PC-3 (cell line): ENCODE measurements at regions of chr10 and their contacts with region 1.

Region 1: GRCh38 chr10:68156373-68157185 is 47.3 kb downstream of the MYPN start:
- DNase-seq: peak; percentile 97
- ATAC-seq: peak; percentile 46
- H3K4me3 ChIP-seq: no peak overlapping the region
- H3K27ac ChIP-seq: peak overlapping the region; percentile 85
- H3K4me1 ChIP-seq: peaks cover 30% of the 10 kb centered on the region
- H3K27me3 ChIP-seq: no peaks in the 10 kb centered on the region
- CTCF ChIP-seq: peak; percentile 100

Region 2: DNA sequence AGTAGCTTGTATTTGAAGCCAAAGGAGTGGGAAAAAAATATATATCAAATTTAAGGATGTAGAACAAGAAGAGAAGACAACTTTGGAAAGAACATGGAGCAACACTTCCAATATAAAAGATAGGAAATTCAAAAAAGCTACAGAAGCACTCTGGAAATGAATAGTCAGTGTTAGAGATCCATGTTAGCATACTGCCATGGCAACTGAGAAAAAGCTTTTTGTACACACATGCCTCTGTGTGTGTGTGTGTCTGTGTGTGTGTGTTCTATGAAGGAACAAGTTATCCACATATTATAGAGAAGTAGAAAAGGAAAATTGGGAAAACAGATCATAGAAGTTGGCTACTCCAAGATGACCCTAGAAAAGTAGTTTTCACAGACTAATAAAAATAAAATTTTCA is 1134.5 kb before region 1 on chr10:
- CTCF ChIA-PET with region 1: no interaction called
- POLR2A ChIA-PET with region 1: no interaction called
- intact Hi-C with region 1: no loop called
- DNase-seq: no peak
- ATAC-seq: no peak
- H3K4me3 ChIP-seq: no peak overlapping the region
- H3K27ac ChIP-seq: no peak overlapping the region
- H3K4me1 ChIP-seq: no peaks in the 10 kb centered on the region
- H3K27me3 ChIP-seq: peaks cover 52% of the 10 kb centered on the region
- CTCF ChIP-seq: no peak

Region 3: GRCh38 chr10:67925449-67926005 is 231.1 kb before region 1 on chr10:
- CTCF ChIA-PET with region 1: no interaction called
- POLR2A ChIA-PET with region 1: no interaction called
- intact Hi-C with region 1: no loop called
- DNase-seq: peak; percentile 60
- ATAC-seq: peak; percentile 30
- H3K4me3 ChIP-seq: no peak overlapping the region
- H3K27ac ChIP-seq: no peak overlapping the region
- H3K4me1 ChIP-seq: peaks cover 16% of the 10 kb centered on the region
- H3K27me3 ChIP-seq: no peaks in the 10 kb centered on the region
- CTCF ChIP-seq: 0 out of 2 replicates have a peak, but pooled peaks have one; percentile 13

Region 4: GRCh38 chr10:68010426-68010940 is 146.1 kb before region 1 on chr10:
- CTCF ChIA-PET with region 1: no interaction called
- POLR2A ChIA-PET with region 1: no interaction called
- intact Hi-C with region 1: no loop called
- DNase-seq: no peak
- ATAC-seq: no peak
- H3K4me3 ChIP-seq: no peak overlapping the region
- H3K27ac ChIP-seq: no peak overlapping the region
- H3K4me1 ChIP-seq: no peaks in the 10 kb centered on the region
- H3K27me3 ChIP-seq: no peaks in the 10 kb centered on the region
- CTCF ChIP-seq: no peak

Region 5: GRCh38 chr10:68067029-68067428 is 89.5 kb before region 1 on chr10:
- CTCF ChIA-PET with region 1: no interaction called
- POLR2A ChIA-PET with region 1: interaction called, 14 read pairs
- intact Hi-C with region 1: no loop called
- DNase-seq: no peak
- ATAC-seq: no peak
- H3K4me3 ChIP-seq: no peak overlapping the region
- H3K27ac ChIP-seq: no peak overlapping the region
- H3K4me1 ChIP-seq: peaks cover 31% of the 10 kb centered on the region
- H3K27me3 ChIP-seq: no peaks in the 10 kb centered on the region
- CTCF ChIP-seq: no peak

Region 6: DNA sequence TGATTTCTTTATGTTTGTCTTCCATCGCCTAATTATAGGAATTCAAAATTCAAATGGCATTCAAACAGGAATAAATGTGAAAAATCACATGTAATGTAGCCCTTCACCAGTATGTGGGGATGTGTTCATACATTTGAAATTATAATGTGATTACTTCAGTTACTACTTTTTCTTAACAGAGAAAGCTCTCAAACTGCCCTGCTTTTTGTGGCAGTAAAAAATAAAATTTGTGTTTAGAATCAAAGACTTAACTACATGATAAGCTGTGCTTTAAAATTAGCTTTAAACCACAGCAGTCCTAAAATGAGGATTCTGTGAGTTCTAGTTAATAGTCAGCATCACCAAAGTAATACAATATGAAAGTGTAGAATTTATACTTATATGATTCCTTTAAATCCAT is 73.7 kb before region 1 on chr10:
- CTCF ChIA-PET with region 1: interaction called, 35 read pairs
- POLR2A ChIA-PET with region 1: no interaction called
- intact Hi-C with region 1: loop called (anchors 1 kb)
- DNase-seq: peak; percentile 89
- ATAC-seq: peak; percentile 14; the same call in 1 of the 2 replicates
- H3K4me3 ChIP-seq: no peak overlapping the region
- H3K27ac ChIP-seq: peak overlapping the region; percentile 57
- H3K4me1 ChIP-seq: peaks cover 63% of the 10 kb centered on the region
- H3K27me3 ChIP-seq: no peaks in the 10 kb centered on the region
- CTCF ChIP-seq: peak; percentile 98

Region 7: DNA sequence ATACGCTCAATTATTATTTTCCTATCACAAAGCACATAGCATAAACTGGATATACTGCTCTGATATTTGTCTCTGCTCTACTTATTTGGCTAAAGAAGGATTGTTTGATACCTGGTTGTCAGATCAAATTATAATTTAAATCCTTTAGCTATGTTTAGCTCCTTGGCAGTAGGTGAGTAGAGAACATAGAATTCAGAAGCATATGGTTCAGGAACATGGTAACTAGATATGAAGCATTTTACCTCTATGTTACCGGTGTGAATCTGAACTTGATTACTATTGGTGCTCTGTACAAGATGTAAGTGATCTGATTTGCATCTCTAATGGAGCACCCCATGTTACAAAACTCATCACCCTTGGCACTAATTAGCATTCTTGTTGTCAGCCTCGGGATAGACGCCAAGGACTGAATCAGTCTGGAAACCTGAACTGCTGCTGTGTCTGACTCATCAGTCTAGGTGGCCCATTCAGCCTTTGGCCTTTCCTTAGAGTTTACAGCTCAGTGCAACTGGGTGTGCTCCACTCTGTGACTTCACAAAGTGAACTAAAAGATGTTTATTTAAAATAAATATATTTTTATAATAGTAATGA is 59.6 kb before region 1 on chr10:
- CTCF ChIA-PET with region 1: interaction called, 4 read pairs
- POLR2A ChIA-PET with region 1: interaction called, 7 read pairs
- intact Hi-C with region 1: loop called (anchors 1 kb)
- DNase-seq: peak; percentile 99
- ATAC-seq: peak; percentile 75
- H3K4me3 ChIP-seq: peak overlapping the region; percentile 10; the same call in 1 of the 2 replicates
- H3K27ac ChIP-seq: peak overlapping the region; percentile 94
- H3K4me1 ChIP-seq: peaks cover 95% of the 10 kb centered on the region
- H3K27me3 ChIP-seq: no peaks in the 10 kb centered on the region
- CTCF ChIP-seq: no peak

Region 8: GRCh38 chr10:68135922-68136718 is 20.5 kb before region 1 on chr10:
- CTCF ChIA-PET with region 1: no interaction called
- POLR2A ChIA-PET with region 1: no interaction called
- intact Hi-C with region 1: loop called (anchors 1 kb)
- DNase-seq: peak; percentile 99
- ATAC-seq: peak; percentile 85
- H3K4me3 ChIP-seq: peak overlapping the region; percentile 39
- H3K27ac ChIP-seq: peak overlapping the region; percentile 88
- H3K4me1 ChIP-seq: peaks cover 63% of the 10 kb centered on the region
- H3K27me3 ChIP-seq: no peaks in the 10 kb centered on the region
- CTCF ChIP-seq: no peak

Region 9: GRCh38 chr10:68261132-68261856 is 104.7 kb after region 1 on chr10:
- CTCF ChIA-PET with region 1: no interaction called
- POLR2A ChIA-PET with region 1: interaction called, 13 read pairs
- intact Hi-C with region 1: no loop called
- DNase-seq: no peak
- ATAC-seq: no peak
- H3K4me3 ChIP-seq: no peak overlapping the region
- H3K27ac ChIP-seq: no peak overlapping the region
- H3K4me1 ChIP-seq: no peaks in the 10 kb centered on the region
- H3K27me3 ChIP-seq: peaks cover 5% of the 10 kb centered on the region; the same call in 1 of the 2 replicates
- CTCF ChIP-seq: no peak

Region 10: GRCh38 chr10:68301790-68302502 is 145.4 kb after region 1 on chr10:
- CTCF ChIA-PET with region 1: no interaction called
- POLR2A ChIA-PET with region 1: no interaction called
- intact Hi-C with region 1: loop called (anchors 1 kb)
- DNase-seq: peak; percentile 94
- ATAC-seq: peak; percentile 91
- H3K4me3 ChIP-seq: no peak overlapping the region
- H3K27ac ChIP-seq: no peak overlapping the region
- H3K4me1 ChIP-seq: peaks cover 8% of the 10 kb centered on the region; the same call in 1 of the 2 replicates
- H3K27me3 ChIP-seq: no peaks in the 10 kb centered on the region
- CTCF ChIP-seq: peak; percentile 97